ENCODE measurements at regions of chr19 and their contacts with region 1.

Region 1: GRCh38 chr19:17703824-17704463 is 15.3 kb upstream of the MAP1S start:
- H3K4me3 Mint-ChIP-seq: no peak overlapping the region
- H3K27ac Mint-ChIP-seq: peak overlapping the region; percentile 4
- H3K4me1 Mint-ChIP-seq: peaks cover 12% of the 10 kb centered on the region
- H3K27me3 Mint-ChIP-seq: peaks cover 9% of the 10 kb centered on the region

Region 2: DNA sequence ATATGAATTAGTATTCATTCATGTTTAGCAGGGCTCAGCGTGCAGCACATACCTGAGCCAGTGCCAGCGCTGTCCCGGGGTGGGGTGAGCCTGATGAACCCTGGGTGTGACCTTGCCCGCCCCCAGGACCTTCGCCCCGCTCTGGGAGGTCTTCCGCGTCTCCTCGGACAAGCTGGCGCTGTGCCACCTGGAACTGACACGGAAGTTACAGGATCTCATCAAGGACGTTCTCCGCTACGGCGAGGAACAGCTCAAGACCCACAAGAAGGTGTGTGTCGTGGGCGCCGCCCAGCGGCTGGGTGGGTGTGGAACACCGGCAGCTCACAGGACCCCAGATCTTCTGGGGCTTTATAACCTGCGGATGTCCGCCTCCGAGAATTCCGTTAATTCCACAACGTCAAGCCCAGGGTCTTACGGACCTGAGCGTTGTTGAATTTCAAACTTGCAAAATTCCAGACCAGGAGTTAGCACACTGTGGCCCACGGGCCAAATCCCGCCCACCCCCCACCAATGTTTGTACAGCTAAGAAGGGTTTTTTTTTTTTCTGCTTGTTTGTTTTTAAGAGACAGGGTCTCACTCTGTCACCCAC is 62.7 kb after region 1 on chr19:
- intact Hi-C with region 1: loop called (anchors 1 kb)
- H3K4me3 Mint-ChIP-seq: peak overlapping the region; percentile 26
- H3K27ac Mint-ChIP-seq: peak overlapping the region; percentile 85
- H3K4me1 Mint-ChIP-seq: peaks cover 31% of the 10 kb centered on the region
- H3K27me3 Mint-ChIP-seq: no peaks in the 10 kb centered on the region

Region 3: DNA sequence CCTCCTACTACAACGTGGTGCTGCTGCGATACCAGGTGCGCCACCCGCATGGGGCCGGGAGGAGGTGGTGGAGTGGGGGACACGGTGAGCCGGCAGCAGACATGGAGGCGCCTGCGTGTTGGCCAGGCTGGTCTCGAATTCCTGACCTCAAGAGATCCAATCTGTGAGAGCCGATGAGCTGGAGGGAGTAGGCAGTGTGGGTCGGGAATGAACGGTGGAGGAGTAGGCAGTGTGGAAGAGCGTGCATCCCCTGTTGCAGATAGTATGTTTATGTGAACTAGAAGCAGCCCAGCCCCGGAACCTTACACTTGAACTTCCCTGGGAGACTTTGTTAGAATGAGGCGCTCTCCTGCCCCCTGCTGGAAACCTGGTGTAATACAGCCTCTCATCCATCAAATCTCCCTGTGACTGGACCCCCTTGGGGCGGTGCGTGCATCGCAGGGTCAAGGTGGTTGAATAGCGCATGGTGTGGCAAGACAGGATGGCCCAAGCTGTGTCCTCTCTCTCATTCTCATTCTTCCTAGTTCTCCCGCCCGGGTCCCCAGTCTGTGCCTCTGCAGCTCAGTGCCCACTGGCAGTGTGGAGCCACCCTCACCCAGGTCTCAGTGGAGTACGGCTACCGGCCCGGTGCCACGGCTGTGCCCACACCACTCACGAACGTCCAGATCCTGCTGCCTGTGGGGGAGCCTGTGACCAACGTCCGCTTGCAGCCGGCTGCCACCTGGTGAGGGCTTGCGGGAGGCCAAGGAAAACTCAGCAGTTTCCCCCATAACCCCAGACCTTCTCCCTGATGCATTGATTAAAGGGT is 80.5 kb after region 1 on chr19:
- intact Hi-C with region 1: loop called (anchors 5 kb)
- H3K4me3 Mint-ChIP-seq: no peak overlapping the region
- H3K27ac Mint-ChIP-seq: no peak overlapping the region
- H3K4me1 Mint-ChIP-seq: peaks cover 34% of the 10 kb centered on the region
- H3K27me3 Mint-ChIP-seq: peaks cover 5% of the 10 kb centered on the region